Left ventricle myocardium inferior (tissue), 1 donor: ENCODE measurements at regions of chr15 and their contacts with region 1.

Region 1: DNA sequence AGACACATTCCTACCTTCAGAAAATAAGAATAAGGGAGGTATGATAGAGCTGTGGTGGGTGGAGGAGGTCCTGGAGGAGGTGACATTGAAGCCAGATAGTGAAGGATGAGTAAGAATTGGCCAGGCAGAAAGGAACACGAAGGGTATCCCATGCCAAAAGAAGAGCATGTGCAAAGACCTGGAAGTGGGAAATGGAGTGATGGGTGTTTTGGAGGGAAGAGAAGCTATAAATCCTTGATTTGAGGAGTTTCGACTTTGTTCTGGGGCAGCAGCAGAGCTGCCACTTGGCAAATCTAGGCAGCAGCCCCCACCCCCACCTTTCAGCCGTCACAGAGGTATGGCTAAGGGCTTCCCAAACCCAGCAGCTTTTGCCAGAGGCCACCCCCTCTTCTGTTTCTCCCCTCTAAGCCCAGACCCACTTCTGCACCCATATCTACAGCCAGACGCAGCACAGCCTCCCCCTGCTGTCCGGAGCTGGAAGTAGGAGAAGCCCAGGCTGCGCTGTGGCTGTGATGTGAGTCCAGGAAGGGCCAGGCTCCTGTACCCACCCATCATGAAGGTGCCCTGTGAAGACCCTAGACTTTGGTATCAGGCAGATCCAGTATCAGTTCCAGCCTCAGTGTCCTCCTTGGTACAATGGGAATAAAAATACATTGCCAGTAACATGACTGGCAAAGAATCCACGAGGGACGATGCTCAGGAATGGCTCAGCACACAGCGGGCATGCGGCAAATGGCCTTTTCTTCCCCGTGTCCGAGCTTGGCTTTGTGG is 188.7 kb upstream of the LINGO1 start:
- DNase-seq: peak; percentile 42
- H3K4me3 ChIP-seq: no peak overlapping the region
- H3K27ac ChIP-seq: no peak overlapping the region
- H3K4me1 ChIP-seq: peaks cover 17% of the 10 kb centered on the region
- H3K27me3 ChIP-seq: peaks cover 88% of the 10 kb centered on the region
- CTCF ChIP-seq: peak; percentile 75

Region 2: GRCh38 chr15:77637851-77638692 is 183.3 kb before region 1 on chr15:
- intact Hi-C with region 1: loop called (anchors 5 kb)
- DNase-seq: no peak
- H3K4me3 ChIP-seq: no peak overlapping the region
- H3K27ac ChIP-seq: no peak overlapping the region
- H3K4me1 ChIP-seq: peaks cover 18% of the 10 kb centered on the region
- H3K27me3 ChIP-seq: peaks cover 76% of the 10 kb centered on the region
- CTCF ChIP-seq: no peak